Colonic mucosa (tissue), 4 donors: ENCODE measurements at regions of chr4 and their contacts with region 1.

Region 1: DNA sequence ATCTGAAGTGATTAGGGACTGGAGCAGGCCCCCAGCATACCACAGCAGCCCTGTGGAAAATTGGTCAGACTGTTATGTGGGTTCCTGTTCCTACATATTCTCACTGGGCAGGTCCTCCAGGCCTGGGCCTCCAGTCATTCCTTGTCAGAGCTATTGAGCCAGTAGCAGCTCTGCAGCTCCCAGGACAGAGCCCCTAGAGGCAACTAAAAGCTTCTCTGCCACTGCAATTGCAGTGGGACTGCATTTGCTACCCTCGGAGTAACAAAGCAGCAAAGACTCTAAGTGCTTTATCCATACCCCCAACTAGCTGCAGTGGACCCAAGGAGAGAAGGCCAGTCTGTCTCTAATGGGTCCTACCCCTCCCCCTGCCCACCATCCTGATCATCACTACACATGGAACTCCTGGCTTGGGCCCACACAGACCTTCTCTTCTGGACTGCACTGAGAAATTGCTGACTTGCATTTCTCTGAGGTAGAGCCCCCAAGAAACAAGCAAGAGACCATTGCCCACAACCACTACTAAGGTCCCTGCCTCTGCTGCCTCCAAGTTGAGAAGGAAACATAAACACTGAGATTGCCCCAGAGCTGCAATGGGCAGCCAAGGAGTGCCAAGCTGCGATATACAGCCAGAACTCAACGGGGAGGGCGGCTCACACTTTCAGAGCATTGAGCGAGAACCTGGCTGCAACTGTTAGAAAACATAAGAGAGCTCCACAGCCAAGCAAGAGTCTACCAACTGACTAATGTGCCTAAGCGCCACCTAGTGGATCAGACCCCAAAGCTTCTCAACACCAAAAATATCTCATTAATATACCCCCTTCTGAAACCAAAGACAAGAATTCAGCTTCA is 738.7 kb upstream of the NDST4 start:
- DNase-seq: peak; percentile 53
- H3K4me3 ChIP-seq: no peak overlapping the region
- H3K27ac ChIP-seq: no peak overlapping the region
- H3K4me1 ChIP-seq: no peaks in the 10 kb centered on the region
- H3K27me3 ChIP-seq: no peaks in the 10 kb centered on the region
- CTCF ChIP-seq: no peak

Region 2: DNA sequence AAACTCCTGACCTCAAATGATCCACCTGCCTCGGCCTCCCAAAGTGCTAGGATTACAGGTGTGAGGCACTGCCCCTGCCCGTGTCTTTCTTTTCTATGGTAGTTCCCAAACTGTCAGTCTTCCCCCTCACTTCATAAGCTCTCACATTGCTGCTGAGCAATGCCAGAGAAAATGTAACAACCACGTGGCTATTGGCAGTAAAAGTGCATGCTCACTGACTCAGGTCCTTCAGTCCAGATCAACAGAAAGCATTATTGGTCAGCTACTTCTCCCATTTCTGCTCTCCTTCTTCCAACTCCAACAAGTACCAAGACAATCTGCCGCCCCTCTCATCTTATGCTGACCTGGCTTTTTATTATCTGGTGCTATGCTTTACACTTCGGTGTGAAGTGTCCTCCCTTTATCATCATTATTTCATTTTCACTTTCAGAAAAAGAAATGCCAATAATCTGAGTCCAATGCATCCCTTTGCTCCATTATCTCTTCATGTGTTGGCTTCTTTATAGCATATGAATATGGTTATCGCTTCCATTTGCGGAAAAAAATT is 1387.3 kb before region 1 on chr4:
- intact Hi-C with region 1: no loop called
- DNase-seq: no peak
- H3K4me3 ChIP-seq: no peak overlapping the region
- H3K27ac ChIP-seq: no peak overlapping the region
- H3K4me1 ChIP-seq: no peaks in the 10 kb centered on the region
- H3K27me3 ChIP-seq: no peaks in the 10 kb centered on the region
- CTCF ChIP-seq: no peak

Region 3: DNA sequence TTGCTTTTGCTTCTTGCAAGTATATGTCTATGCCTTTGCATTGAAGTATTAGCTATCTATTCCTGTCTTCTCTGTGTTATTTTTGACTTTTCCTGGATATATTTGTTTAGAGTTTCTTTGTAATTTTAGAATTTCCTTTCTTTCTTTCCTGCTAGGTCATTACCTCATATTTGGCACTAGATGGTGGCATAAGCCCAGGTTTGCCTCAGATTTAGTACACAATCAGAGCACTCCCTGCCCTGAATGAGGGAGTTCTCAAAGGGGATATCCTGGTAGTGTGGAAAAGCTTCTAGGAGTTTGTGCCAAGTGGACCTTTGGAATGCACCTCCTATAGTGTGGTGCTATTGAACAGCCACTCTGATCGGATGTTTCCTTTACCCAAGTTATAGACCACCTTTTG is 1071.9 kb before region 1 on chr4:
- intact Hi-C with region 1: loop called (anchors 5 kb)
- DNase-seq: no peak
- H3K4me3 ChIP-seq: no peak overlapping the region
- H3K27ac ChIP-seq: no peak overlapping the region
- H3K4me1 ChIP-seq: no peaks in the 10 kb centered on the region
- H3K27me3 ChIP-seq: no peaks in the 10 kb centered on the region
- CTCF ChIP-seq: peak; percentile 28